Activated CD4-positive, alpha-beta memory T cell treated with anti-CD3 and anti-CD28 coated beads for 36 hours (primary cell): ENCODE measurements at regions of chr1 and their contacts with region 1.

Region 1: GRCh38 chr1:159214149-159214760 is 9.6 kb downstream of the ACKR1 start:
- DNase-seq: peak; percentile 54
- H3K4me3 Mint-ChIP-seq: no peak overlapping the region
- H3K27ac Mint-ChIP-seq: no peak overlapping the region
- H3K4me1 Mint-ChIP-seq: no peaks in the 10 kb centered on the region
- H3K27me3 Mint-ChIP-seq: peaks cover 29% of the 10 kb centered on the region

Region 2: DNA sequence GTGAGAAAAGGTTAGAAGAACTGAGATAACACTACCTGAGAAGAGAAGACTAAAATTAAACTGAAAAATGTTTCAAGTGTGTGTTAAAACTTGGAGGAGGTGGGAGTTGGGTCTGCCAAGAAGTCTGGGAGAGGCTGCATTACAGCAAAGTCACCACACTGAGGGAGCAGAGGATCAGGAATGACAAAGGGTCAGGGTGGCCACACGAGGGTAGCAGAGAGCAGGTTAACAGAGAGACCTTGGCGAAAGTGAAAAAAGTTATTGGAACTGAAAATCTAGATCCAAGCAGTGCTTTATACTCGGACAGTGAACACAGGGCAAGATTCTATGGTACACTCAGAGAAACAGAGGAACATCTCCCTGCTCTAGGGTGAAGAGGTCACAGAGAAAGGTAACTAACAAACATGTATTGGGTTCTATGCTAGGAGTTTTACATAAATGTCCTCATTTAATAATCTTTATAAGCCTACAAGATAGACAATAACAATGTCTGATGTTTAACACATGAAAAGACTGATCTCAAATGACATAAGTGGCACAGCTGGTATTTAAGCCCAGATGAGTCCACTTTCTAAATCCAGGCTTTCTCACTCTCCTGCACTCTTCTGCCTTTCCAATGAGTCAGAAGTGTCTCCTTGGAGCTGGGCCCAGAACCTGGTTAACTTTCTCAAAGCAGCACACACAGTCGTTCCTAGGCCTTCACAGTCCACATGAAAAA is 53.1 kb before region 1 on chr1:
- CTCF ChIA-PET with region 1: interaction called, 112 read pairs
- POLR2A ChIA-PET with region 1: no interaction called
- intact Hi-C with region 1: loop called (anchors 1 kb)
- DNase-seq: peak; percentile 77
- H3K4me3 Mint-ChIP-seq: no peak overlapping the region
- H3K27ac Mint-ChIP-seq: no peak overlapping the region
- H3K4me1 Mint-ChIP-seq: peaks cover 2% of the 10 kb centered on the region
- H3K27me3 Mint-ChIP-seq: peaks cover 38% of the 10 kb centered on the region

Region 3: DNA sequence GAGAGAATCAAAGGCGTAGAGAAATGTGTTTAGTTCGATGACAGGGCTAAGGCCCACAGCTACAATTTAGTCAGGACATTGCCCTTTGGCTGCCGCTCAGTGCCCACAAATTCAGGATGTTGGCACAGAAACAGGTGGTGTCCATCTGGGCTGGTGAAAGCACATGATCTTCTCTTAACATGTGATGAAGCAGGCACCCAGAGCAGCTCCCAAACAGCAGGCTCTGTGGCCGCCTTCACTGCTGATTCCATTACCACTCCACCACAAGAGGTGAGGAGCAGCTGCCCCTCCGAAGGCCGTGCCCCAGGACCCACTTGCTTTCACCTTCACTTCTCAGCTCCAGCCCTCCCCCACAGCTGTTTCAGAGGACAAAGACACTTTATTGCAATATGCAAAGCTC is 15.2 kb after region 1 on chr1:
- CTCF ChIA-PET with region 1: interaction called, 14 read pairs
- POLR2A ChIA-PET with region 1: no interaction called
- intact Hi-C with region 1: no loop called
- DNase-seq: no peak
- H3K4me3 Mint-ChIP-seq: no peak overlapping the region
- H3K27ac Mint-ChIP-seq: no peak overlapping the region
- H3K4me1 Mint-ChIP-seq: no peaks in the 10 kb centered on the region
- H3K27me3 Mint-ChIP-seq: peaks cover 13% of the 10 kb centered on the region